MCF 10A (cell line): ENCODE measurements at regions of chr1 and their contacts with region 1.

Region 1: GRCh38 chr1:240455228-240455821 is 156.6 kb downstream of the GREM2 start:
- DNase-seq: peak; percentile 65
- H3K4me3 Mint-ChIP-seq: no peak overlapping the region
- H3K27ac Mint-ChIP-seq: no peak overlapping the region
- H3K4me1 Mint-ChIP-seq: no peaks in the 10 kb centered on the region
- H3K27me3 Mint-ChIP-seq: no peaks in the 10 kb centered on the region
- CTCF ChIP-seq: peak; percentile 38

Region 2: GRCh38 chr1:240441684-240442083 is 13.6 kb before region 1 on chr1:
- CTCF ChIA-PET with region 1: interaction called, 51 read pairs
- POLR2A ChIA-PET with region 1: interaction called, 5 read pairs
- intact Hi-C with region 1: no loop called
- DNase-seq: peak; percentile 40
- H3K4me3 Mint-ChIP-seq: no peak overlapping the region
- H3K27ac Mint-ChIP-seq: peak overlapping the region; percentile 52
- H3K4me1 Mint-ChIP-seq: peaks cover 11% of the 10 kb centered on the region
- H3K27me3 Mint-ChIP-seq: no peaks in the 10 kb centered on the region
- CTCF ChIP-seq: no peak

Region 3: DNA sequence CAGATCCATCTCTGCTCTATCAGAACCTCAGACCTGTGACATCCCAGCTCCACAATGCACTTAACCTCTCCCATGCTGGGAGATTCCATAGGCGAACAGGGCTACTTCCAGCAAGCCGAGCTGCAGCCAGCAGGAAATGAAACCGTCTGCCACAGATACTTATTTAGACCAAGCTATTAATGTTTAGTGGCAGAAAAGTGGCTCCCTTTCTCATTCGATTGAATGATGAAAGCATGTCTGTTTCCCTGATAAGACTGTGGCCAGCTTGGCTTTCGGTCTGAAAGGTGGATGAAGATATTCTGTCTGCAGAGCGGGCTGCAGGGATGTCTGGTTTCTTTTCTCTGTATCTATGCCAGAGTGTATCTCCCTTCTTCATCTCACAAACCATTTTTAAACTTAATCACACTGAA is 10.2 kb after region 1 on chr1:
- CTCF ChIA-PET with region 1: interaction called, 26 read pairs
- POLR2A ChIA-PET with region 1: interaction called, 4 read pairs
- intact Hi-C with region 1: no loop called
- DNase-seq: no peak
- H3K4me3 Mint-ChIP-seq: no peak overlapping the region
- H3K27ac Mint-ChIP-seq: no peak overlapping the region
- H3K4me1 Mint-ChIP-seq: peaks cover 8% of the 10 kb centered on the region
- H3K27me3 Mint-ChIP-seq: no peaks in the 10 kb centered on the region
- CTCF ChIP-seq: no peak

Region 4: GRCh38 chr1:240602189-240602588 is 146.9 kb after region 1 on chr1:
- CTCF ChIA-PET with region 1: interaction called, 6 read pairs
- POLR2A ChIA-PET with region 1: interaction called, 3 read pairs
- intact Hi-C with region 1: loop called (anchors 1 kb)
- DNase-seq: no peak
- H3K4me3 Mint-ChIP-seq: no peak overlapping the region
- H3K27ac Mint-ChIP-seq: no peak overlapping the region
- H3K4me1 Mint-ChIP-seq: no peaks in the 10 kb centered on the region
- H3K27me3 Mint-ChIP-seq: no peaks in the 10 kb centered on the region
- CTCF ChIP-seq: peak; percentile 49